ENCODE measurements at regions of chr7 and their contacts with region 1.

Region 1: GRCh38 chr7:8217200-8218068 is 44.5 kb downstream of the ICA1 start:
- DNase-seq: no peak
- H3K4me3 ChIP-seq: no peak overlapping the region
- H3K27ac ChIP-seq: no peak overlapping the region
- H3K4me1 ChIP-seq: peaks cover 5 to 25% (median 20%) of the 10 kb centered on the region in 4 donors
- H3K27me3 ChIP-seq: no peaks in the 10 kb centered on the region
- CTCF ChIP-seq: peak; percentile 64 to 76 (median 69)
- EP300 ChIP-seq: no peak
- POLR2A ChIP-seq: no peak

Region 2: GRCh38 chr7:7103343-7104313 is 1113.8 kb before region 1 on chr7:
- intact Hi-C with region 1: loop called (anchors 10 kb)
- DNase-seq: no peak
- H3K4me3 ChIP-seq: no peak overlapping the region
- H3K27ac ChIP-seq: no peak overlapping the region
- H3K4me1 ChIP-seq: peaks cover 14 to 15% (median 14%) of the 10 kb centered on the region in 4 donors
- H3K27me3 ChIP-seq: no peaks in the 10 kb centered on the region
- CTCF ChIP-seq: peak; percentile 62 to 66 (median 62)
- EP300 ChIP-seq: no peak
- POLR2A ChIP-seq: no peak

Region 3: GRCh38 chr7:7424151-7424873 is 793.1 kb before region 1 on chr7:
- intact Hi-C with region 1: loop called (anchors 5 kb)
- DNase-seq: no peak
- H3K4me3 ChIP-seq: peak overlapping the region; percentile 41 to 61 (median 53)
- H3K27ac ChIP-seq: no peak overlapping the region
- H3K4me1 ChIP-seq: peaks cover 0 to 5% (median 5%) of the 10 kb centered on the region in 4 donors
- H3K27me3 ChIP-seq: no peaks in the 10 kb centered on the region
- CTCF ChIP-seq: peak; percentile 67 to 70 (median 69)
- EP300 ChIP-seq: no peak
- POLR2A ChIP-seq: no peak

Region 4: GRCh38 chr7:7681179-7681935 is 536.1 kb before region 1 on chr7:
- intact Hi-C with region 1: loop called (anchors 5 kb)
- DNase-seq: no peak
- H3K4me3 ChIP-seq: no peak overlapping the region
- H3K27ac ChIP-seq: peak overlapping the region in 2 of 4 donors; percentile 8 to 50
- H3K4me1 ChIP-seq: peaks cover 8 to 22% (median 14%) of the 10 kb centered on the region in 4 donors
- H3K27me3 ChIP-seq: no peaks in the 10 kb centered on the region
- CTCF ChIP-seq: peak; percentile 60 to 63 (median 62)
- EP300 ChIP-seq: no peak
- POLR2A ChIP-seq: no peak

Region 5: DNA sequence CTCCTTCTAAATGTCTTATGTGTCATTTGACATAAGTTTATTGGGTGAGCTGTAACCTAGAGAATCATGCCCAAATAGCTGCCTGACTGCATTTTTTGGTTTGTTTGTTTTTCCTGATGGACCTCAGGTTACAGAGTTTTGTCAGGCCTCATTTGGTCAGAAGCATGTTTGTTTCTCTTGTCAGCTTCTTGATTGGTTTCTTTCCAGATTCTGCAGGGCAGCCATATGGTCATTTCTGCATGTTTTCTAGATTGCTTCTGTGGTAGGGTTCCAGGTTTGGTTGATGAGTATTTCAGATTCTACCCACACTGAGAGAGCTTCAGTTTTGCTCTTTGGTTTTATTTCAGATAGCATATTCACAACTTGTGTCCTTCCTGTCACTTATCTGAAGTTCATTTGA is 220.9 kb before region 1 on chr7:
- intact Hi-C with region 1: no loop called
- DNase-seq: no peak
- H3K4me3 ChIP-seq: no peak overlapping the region
- H3K27ac ChIP-seq: no peak overlapping the region
- H3K4me1 ChIP-seq: no peaks in the 10 kb centered on the region
- H3K27me3 ChIP-seq: no peaks in the 10 kb centered on the region
- CTCF ChIP-seq: no peak
- EP300 ChIP-seq: no peak
- POLR2A ChIP-seq: no peak

Measured in esophagus muscularis mucosa (tissue), 4 donors.